OCI-LY7 (cell line): ENCODE measurements at regions of chr3 and their contacts with region 1.

Region 1: DNA sequence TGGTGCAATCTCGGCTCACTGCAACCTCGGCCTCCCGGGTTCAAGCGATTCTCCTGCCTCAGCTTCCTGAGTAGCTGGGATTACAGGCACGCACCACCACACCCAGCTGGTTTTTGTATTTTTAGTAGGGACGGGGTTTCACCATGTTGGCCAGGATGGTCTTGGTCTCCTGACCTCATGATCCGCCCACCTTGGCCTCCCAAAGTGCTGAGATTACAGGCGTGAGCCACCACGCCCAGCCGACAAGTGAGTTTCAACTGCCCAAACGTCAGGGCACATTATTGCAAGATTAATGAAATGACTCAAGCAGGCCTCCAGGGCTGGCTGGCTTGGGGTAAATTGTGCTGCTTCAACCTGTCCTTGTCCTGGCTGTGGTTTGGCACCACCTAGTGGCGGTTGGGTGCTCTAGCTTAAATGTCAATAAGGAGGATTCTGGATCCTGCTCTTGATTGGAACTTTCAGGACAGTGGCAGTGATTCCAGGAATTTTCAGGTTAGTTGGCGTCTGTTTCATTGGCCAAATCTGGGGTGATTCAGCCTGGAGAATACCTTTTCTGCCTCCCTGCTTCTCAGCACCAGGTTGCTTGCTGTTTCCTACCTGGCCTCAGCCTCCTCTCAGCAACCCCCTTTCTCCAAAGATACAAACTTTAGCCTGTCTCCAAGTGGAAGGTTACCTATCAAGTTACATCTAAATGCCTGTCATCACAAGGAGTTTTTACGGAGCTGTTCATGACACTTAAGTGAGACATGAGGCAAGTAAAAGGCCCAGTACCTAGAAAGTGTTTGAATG is 32.4 kb upstream of the SACM1L start:
- DNase-seq: peak; percentile 90
- H3K4me3 ChIP-seq: no peak overlapping the region
- H3K27ac ChIP-seq: no peak overlapping the region
- H3K4me1 ChIP-seq: no peaks in the 10 kb centered on the region
- CTCF ChIP-seq: peak; percentile 90

Region 2: GRCh38 chr3:45037734-45038455 is 618.9 kb before region 1 on chr3:
- CTCF ChIA-PET with region 1: no interaction called
- POLR2A ChIA-PET with region 1: no interaction called
- intact Hi-C with region 1: loop called (anchors 2 kb)
- DNase-seq: peak; percentile 91
- H3K4me3 ChIP-seq: no peak overlapping the region
- H3K27ac ChIP-seq: no peak overlapping the region
- H3K4me1 ChIP-seq: no peaks in the 10 kb centered on the region
- CTCF ChIP-seq: peak; percentile 93

Region 3: GRCh38 chr3:45507820-45508317 is 148.9 kb before region 1 on chr3:
- CTCF ChIA-PET with region 1: interaction called, 14 read pairs
- POLR2A ChIA-PET with region 1: interaction called, 5 read pairs
- intact Hi-C with region 1: loop called (anchors 1 kb)
- DNase-seq: no peak
- H3K4me3 ChIP-seq: no peak overlapping the region
- H3K27ac ChIP-seq: no peak overlapping the region
- H3K4me1 ChIP-seq: no peaks in the 10 kb centered on the region
- CTCF ChIP-seq: no peak

Region 4: GRCh38 chr3:45553996-45554666 is 102.6 kb before region 1 on chr3:
- CTCF ChIA-PET with region 1: interaction called, 3 read pairs
- POLR2A ChIA-PET with region 1: interaction called, 5 read pairs
- intact Hi-C with region 1: loop called (anchors 2 kb)
- DNase-seq: peak; percentile 76
- H3K4me3 ChIP-seq: peak overlapping the region; percentile 43
- H3K27ac ChIP-seq: peak overlapping the region; percentile 67
- H3K4me1 ChIP-seq: peaks cover 34% of the 10 kb centered on the region
- CTCF ChIP-seq: no peak

Region 5: DNA sequence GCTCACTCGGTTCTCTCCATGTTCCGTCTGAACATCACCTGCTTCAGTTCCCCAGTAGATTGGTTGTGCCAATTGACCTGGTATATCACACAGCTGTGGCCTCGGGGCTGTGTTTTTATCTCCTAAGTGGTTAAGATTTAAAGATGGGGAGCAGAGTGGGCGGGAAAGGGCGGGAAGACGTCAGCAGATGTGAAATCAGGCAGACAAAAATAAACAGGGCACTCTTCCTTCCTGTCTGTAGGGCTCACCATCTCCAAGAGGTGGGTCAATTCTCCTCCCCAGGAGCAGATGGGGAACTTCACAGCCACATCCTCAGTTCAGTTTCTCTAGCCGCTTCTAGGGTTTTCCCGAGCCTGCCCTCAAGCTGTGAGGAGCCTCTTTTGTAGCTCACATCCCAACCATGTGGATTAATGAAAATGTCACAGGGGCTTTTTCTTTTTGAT is 89.0 kb before region 1 on chr3:
- CTCF ChIA-PET with region 1: no interaction called
- POLR2A ChIA-PET with region 1: no interaction called
- intact Hi-C with region 1: no loop called
- DNase-seq: peak; percentile 52
- H3K4me3 ChIP-seq: peak overlapping the region; percentile 25
- H3K27ac ChIP-seq: peak overlapping the region; percentile 22
- H3K4me1 ChIP-seq: peaks cover 57% of the 10 kb centered on the region
- CTCF ChIP-seq: no peak

Region 6: DNA sequence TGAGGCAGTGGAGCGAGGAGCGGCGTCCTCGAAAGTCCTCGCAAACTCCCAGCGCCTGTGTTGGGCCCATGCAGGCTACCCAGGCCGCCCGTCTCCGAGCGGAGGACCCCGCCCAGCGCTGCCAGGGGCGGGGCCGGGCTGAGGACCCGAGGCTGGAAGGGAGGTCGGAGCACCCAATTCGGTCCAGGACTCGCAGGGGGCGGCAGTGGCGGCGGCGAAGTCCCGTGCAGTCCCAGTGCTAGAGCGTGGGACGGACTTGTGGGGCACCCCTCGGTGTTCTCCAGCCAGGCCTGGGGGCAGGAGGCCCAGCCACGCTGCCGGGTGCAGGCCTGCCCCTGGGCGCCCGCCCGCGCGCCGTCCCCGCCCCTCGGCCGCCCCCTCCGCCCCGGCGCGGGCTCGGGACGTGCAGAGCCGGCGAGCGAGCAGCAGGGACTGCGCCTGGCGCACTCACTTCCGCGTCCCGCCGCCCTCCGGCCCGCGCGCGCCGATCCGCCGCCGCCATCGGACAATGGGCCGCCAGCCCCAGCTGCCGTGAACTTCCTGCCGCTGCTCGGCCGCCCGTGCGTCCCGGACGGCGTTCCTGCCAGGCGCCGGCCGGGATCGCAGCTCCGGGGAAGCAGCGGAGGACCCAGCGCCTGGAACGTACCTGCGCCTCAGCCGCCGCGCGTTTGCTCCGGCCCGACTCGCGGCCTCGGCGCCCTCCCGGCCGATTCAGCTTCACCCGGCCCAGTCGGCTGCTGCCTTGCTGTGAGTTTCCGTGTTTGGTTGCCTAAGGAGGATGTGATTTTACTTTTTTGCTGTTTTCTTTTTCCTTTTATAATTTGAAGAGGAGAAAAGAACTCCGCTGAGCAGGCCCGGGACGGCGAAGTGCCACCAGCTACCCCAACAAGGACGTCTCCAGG is 62.8 kb before region 1 on chr3:
- CTCF ChIA-PET with region 1: interaction called, 5 read pairs
- POLR2A ChIA-PET with region 1: interaction called, 5 read pairs
- intact Hi-C with region 1: loop called (anchors 1 kb)
- DNase-seq: peak; percentile 80
- H3K4me3 ChIP-seq: peak overlapping the region; percentile 69
- H3K27ac ChIP-seq: peak overlapping the region; percentile 39
- H3K4me1 ChIP-seq: peaks cover 56% of the 10 kb centered on the region
- CTCF ChIP-seq: no peak

Region 7: DNA sequence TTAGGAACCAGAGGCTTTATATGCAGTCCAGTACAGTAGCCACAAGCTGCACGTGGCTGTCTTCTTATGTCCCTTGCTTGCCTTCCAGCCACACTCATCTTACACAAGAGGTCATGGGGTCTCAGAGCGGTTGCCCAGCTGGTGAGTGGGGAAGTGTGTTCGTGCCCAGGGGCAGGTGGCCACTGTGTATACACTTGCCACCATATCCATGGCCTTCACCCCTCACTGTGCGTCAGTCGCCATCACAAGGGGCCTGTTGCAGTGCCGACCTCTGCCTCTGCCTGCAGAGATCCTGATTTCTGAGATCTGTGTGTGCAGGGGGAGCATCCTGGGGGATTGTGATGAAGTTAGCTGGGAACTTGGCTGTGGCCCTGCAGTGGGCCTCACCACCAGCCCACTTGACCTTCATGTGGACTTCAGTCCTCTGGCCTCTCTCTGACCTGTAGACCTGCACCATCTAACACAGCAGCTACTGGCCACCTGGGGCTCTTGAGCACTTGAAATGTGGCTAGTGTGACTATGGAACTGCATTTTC is 10.7 kb before region 1 on chr3:
- CTCF ChIA-PET with region 1: no interaction called
- POLR2A ChIA-PET with region 1: no interaction called
- intact Hi-C with region 1: no loop called
- DNase-seq: no peak
- H3K4me3 ChIP-seq: no peak overlapping the region
- H3K27ac ChIP-seq: no peak overlapping the region
- H3K4me1 ChIP-seq: no peaks in the 10 kb centered on the region
- CTCF ChIP-seq: no peak

Region 8: DNA sequence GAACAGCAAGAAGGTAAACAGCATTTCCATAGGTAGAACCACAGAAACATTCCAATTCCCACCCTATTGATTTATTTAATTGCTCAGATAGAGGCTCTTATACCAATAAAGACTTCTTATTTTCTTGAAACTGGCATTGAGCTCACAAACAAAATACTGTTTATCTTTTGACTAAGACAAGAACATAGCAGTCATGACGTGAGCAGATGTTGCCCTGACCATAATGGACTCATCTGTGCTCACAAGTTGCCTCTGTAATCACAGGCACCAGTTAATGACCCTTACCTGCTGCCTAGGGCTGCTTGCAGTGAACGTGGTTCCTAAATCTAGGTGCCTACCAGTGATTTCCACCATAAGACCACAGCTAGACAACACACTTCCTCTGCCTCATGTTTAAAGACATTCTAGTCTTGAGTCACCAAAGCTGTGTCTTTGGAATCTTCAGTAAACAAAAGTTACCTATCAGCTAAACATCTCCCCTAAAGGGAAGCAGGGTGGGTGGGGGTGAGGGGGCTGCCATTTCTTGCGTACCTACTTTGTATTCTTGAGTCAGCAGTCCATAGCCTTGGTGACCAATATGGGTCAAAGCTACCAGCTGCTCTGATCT is 336.8 kb after region 1 on chr3:
- CTCF ChIA-PET with region 1: interaction called, 10 read pairs
- POLR2A ChIA-PET with region 1: no interaction called
- intact Hi-C with region 1: no loop called
- DNase-seq: no peak
- H3K4me3 ChIP-seq: no peak overlapping the region
- H3K27ac ChIP-seq: no peak overlapping the region
- H3K4me1 ChIP-seq: peaks cover 30% of the 10 kb centered on the region
- CTCF ChIP-seq: no peak